Posterior vena cava (tissue), 2 donors: ENCODE measurements at regions of chr17 and their contacts with region 1.

Region 1: GRCh38 chr17:2323629-2324314 is 12.5 kb downstream of the TSR1 start:
- DNase-seq: no peak

Region 2: DNA sequence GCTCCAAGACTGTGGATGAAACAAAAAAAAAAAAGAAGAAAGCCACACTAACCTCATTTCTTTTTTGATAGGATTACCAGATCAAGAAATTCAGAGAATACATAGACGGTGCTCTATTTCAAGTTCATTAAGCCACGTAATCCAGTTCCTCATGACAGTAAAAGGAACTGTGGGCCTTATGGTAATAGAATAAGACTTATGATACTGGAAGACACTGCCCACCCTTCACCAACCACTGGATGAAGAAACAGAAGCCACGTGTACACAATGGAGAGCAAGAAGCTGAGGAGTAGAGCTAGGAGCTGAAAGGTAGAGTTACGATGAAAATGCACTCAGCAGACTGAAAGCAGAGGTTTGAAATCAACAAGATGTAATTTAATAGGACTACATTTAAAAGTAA is 1511.0 kb after region 1 on chr17:
- intact Hi-C with region 1: loop called in 1 of 2 experiments (anchors 5 kb)
- DNase-seq: no peak